ENCODE measurements at regions of chr4 and their contacts with region 1.

Region 1: GRCh38 chr4:11428899-11429698 is 405 bp upstream of the HS3ST1 start:
- DNase-seq: peak; percentile 96
- H3K4me3 ChIP-seq: peak overlapping the region; percentile 78 to 83 (median 82)
- H3K27ac ChIP-seq: peak overlapping the region; percentile 84
- H3K4me1 ChIP-seq: peaks cover 39% of the 10 kb centered on the region
- H3K27me3 ChIP-seq: no peaks in the 10 kb centered on the region
- CTCF ChIP-seq: peak; percentile 62 to 95

Region 2: GRCh38 chr4:10582059-10582686 is 846.9 kb before region 1 on chr4:
- CTCF ChIA-PET with region 1: no interaction called
- dilution Hi-C with region 1: no loop called
- in situ Hi-C with region 1: loop called in 1 of 2 experiments (anchors 5 kb)
- intact Hi-C with region 1: loop called (anchors 1 kb)
- DNase-seq: peak; percentile 35
- H3K4me3 ChIP-seq: no peak overlapping the region
- H3K27ac ChIP-seq: no peak overlapping the region
- H3K4me1 ChIP-seq: no peaks in the 10 kb centered on the region
- H3K27me3 ChIP-seq: no peaks in the 10 kb centered on the region
- CTCF ChIP-seq: peak; percentile 89 to 99

Region 3: GRCh38 chr4:11073621-11074051 is 355.5 kb before region 1 on chr4:
- CTCF ChIA-PET with region 1: no interaction called
- dilution Hi-C with region 1: no loop called
- in situ Hi-C with region 1: no loop called
- intact Hi-C with region 1: loop called (anchors 10 kb)
- DNase-seq: no peak
- H3K4me3 ChIP-seq: no peak overlapping the region
- H3K27ac ChIP-seq: no peak overlapping the region
- H3K4me1 ChIP-seq: no peaks in the 10 kb centered on the region
- H3K27me3 ChIP-seq: peaks cover 3% of the 10 kb centered on the region
- CTCF ChIP-seq: no peak

Region 4: GRCh38 chr4:11355224-11355623 is 73.9 kb before region 1 on chr4:
- CTCF ChIA-PET with region 1: no interaction called
- dilution Hi-C with region 1: no loop called
- in situ Hi-C with region 1: no loop called
- intact Hi-C with region 1: no loop called
- DNase-seq: no peak
- H3K4me3 ChIP-seq: no peak overlapping the region
- H3K27ac ChIP-seq: no peak overlapping the region
- H3K4me1 ChIP-seq: no peaks in the 10 kb centered on the region
- H3K27me3 ChIP-seq: no peaks in the 10 kb centered on the region
- CTCF ChIP-seq: no peak

Region 5: GRCh38 chr4:11497212-11497806 is 68.2 kb after region 1 on chr4:
- CTCF ChIA-PET with region 1: interaction called, 3 read pairs
- dilution Hi-C with region 1: no loop called
- in situ Hi-C with region 1: no loop called
- intact Hi-C with region 1: loop called (anchors 1 kb)
- DNase-seq: peak; percentile 79
- H3K4me3 ChIP-seq: no peak overlapping the region
- H3K27ac ChIP-seq: peak overlapping the region; percentile 93
- H3K4me1 ChIP-seq: peaks cover 38% of the 10 kb centered on the region
- H3K27me3 ChIP-seq: no peaks in the 10 kb centered on the region
- CTCF ChIP-seq: peak; percentile 42 to 52

Region 6: GRCh38 chr4:11635359-11636072 is 206.4 kb after region 1 on chr4:
- CTCF ChIA-PET with region 1: interaction called, 3 read pairs
- dilution Hi-C with region 1: no loop called
- in situ Hi-C with region 1: loop called in 1 of 2 experiments (anchors 5 kb)
- intact Hi-C with region 1: no loop called
- DNase-seq: peak; percentile 91
- H3K4me3 ChIP-seq: no peak overlapping the region
- H3K27ac ChIP-seq: peak overlapping the region; percentile 96
- H3K4me1 ChIP-seq: peaks cover 45% of the 10 kb centered on the region
- H3K27me3 ChIP-seq: no peaks in the 10 kb centered on the region
- CTCF ChIP-seq: no peak

Measured in mammary epithelial cell (primary cell).